Thyroid gland (tissue), 4 donors: ENCODE measurements at regions of chr12 and their contacts with region 1.

Region 1: GRCh38 chr12:117025481-117026151 is 73.6 kb downstream of the TESC start:
- DNase-seq: peak; percentile 69
- H3K4me3 ChIP-seq: no peak overlapping the region
- H3K27ac ChIP-seq: peak overlapping the region; percentile 37 to 58 (median 43)
- H3K4me1 ChIP-seq: peaks cover 26 to 40% of the 10 kb centered on the region in 2 donors
- H3K27me3 ChIP-seq: no peaks in the 10 kb centered on the region
- CTCF ChIP-seq: peak; percentile 70 to 95 (median 88)
- POLR2A ChIP-seq: no peak

Region 2: GRCh38 chr12:116880817-116881324 is 144.7 kb before region 1 on chr12:
- intact Hi-C with region 1: no loop called
- DNase-seq: peak; percentile 51
- H3K4me3 ChIP-seq: peak overlapping the region in 1 of 3 donors; percentile 21
- H3K27ac ChIP-seq: no peak overlapping the region
- H3K4me1 ChIP-seq: peaks cover 18 to 37% of the 10 kb centered on the region in 2 donors
- H3K27me3 ChIP-seq: peaks cover 9% of the 10 kb centered on the region
- CTCF ChIP-seq: peak in 2 of 6 experiments; percentile 32 to 35
- POLR2A ChIP-seq: no peak

Region 3: DNA sequence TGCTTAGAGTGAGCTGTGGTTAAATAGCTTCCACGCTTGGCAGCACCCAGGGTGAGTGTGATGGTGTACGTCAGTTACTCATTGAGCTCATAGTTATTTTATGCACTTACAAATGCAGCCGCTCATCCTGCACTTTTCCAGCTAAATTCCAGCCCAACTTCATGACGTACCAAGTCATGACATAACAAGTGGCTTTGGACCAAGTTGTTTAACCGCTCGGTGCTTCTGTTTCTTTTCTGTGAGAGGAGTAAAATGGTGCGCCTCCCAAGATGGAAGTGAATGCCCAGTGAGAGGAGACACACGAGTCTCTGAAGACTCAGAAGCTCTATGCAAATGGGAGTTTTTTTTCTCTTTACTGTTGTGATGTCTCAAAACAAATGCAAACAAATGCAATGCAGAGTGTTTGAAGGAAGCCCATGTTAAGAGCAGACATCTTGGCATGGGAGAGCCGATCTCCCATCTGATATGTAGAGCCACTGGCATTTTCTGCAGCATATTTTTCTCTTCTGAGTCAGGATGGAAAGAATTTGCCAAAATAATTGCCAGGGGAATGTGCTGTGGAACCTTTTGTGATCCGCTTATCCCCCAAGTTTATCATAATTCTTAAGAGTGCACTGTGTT is 42.7 kb before region 1 on chr12:
- intact Hi-C with region 1: no loop called
- DNase-seq: peak; percentile 9 to 21
- H3K4me3 ChIP-seq: no peak overlapping the region
- H3K27ac ChIP-seq: no peak overlapping the region
- H3K4me1 ChIP-seq: peaks cover 0 to 6% of the 10 kb centered on the region in 2 donors
- H3K27me3 ChIP-seq: no peaks in the 10 kb centered on the region
- CTCF ChIP-seq: no peak
- POLR2A ChIP-seq: no peak

Region 4: GRCh38 chr12:117119592-117120198 is 94.1 kb after region 1 on chr12:
- intact Hi-C with region 1: loop called (anchors 10 kb)
- DNase-seq: no peak
- H3K4me3 ChIP-seq: no peak overlapping the region
- H3K27ac ChIP-seq: no peak overlapping the region
- H3K4me1 ChIP-seq: peaks cover 27 to 51% of the 10 kb centered on the region in 2 donors
- H3K27me3 ChIP-seq: no peaks in the 10 kb centered on the region
- CTCF ChIP-seq: peak in 5 of 6 experiments; percentile 17 to 67 (median 63)
- POLR2A ChIP-seq: no peak

Region 5: GRCh38 chr12:117148642-117149041 is 123.0 kb after region 1 on chr12:
- intact Hi-C with region 1: loop called (anchors 5 kb)
- DNase-seq: no peak
- H3K4me3 ChIP-seq: no peak overlapping the region
- H3K27ac ChIP-seq: no peak overlapping the region
- H3K4me1 ChIP-seq: no peaks in the 10 kb centered on the region
- H3K27me3 ChIP-seq: no peaks in the 10 kb centered on the region
- CTCF ChIP-seq: no peak
- POLR2A ChIP-seq: no peak